ENCODE measurements at regions of chr5 and their contacts with region 1.

Region 1: DNA sequence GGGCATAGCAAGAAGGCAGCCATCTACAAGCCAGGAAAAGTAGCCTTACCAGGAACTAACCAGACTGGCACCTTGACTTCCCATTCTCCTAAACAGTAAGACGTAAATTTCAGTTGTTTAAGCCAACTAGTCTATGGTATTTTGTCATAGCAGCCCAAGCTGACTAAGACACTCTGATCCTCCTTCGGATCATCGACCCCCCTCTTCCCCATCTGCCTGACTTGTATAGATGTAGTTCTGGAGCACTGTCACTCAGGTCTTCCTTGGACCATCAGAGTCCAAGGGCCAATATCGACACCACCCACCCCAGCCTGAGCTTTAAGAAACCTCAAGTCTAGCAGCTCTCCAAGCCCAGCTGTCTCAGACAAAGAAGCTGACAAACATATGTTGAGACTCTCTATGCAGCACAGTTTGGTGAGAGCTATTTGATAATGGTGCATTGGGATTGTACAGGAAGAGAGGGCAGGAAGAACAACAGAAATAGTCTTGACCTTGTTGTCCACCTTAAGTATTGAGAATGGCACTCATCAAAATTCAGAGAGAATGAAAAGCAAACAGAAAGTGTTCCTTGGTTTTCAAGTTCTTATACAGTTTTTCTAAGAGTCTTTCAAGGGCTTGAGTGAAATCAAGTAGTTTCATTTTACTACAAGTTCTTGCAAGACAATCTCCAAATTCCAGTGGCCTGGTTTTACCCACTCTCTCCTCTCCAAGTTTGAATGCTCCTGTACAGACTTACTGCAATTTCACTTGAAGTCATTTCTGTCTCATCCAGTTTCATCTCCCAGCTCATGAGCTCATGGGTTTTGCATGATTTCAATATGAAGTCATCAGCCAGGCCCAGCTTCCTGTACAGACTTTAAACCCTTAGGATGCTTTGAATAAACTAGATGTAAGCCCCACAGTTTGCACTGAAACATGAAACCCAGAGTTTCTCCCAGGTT is 122.3 kb upstream of the RAI14 start:
- DNase-seq: no peak
- H3K4me3 Mint-ChIP-seq: no peak overlapping the region
- H3K27ac Mint-ChIP-seq: no peak overlapping the region
- H3K4me1 Mint-ChIP-seq: no peaks in the 10 kb centered on the region
- H3K27me3 Mint-ChIP-seq: no peaks in the 10 kb centered on the region

Region 2: DNA sequence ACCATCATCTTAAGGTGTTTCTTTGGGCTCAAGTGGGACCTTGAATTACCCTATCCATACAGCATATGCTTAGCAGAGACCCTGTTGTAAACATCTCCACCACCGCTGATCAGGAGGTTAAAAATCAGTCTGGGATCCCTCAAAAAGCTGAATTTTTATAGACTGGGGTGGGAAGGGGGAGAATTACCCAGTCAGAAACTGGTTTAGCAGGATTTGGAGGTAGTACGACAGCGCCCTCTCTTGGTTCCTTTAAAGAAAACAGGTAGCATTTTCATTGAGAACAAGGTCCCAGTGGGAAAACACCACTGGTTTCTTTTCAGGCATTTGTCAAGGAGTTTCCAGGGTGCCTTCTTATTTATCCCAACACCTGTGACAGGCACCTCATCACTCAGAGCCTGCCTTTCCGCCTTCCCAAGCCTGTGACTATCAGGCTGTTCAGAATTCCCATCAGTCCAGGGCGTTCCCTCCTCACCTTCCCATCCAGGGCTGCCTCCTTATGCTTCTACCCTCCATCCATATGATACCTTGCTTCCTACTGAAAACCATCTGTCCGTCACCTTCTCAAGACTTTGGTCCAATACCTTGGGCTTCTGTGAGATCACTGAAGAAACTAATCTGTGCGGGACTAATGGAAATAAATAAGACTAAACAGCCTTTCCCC is 81.6 kb before region 1 on chr5:
- CTCF ChIA-PET with region 1: no interaction called
- DNase-seq: no peak
- H3K4me3 Mint-ChIP-seq: no peak overlapping the region
- H3K27ac Mint-ChIP-seq: no peak overlapping the region
- H3K4me1 Mint-ChIP-seq: no peaks in the 10 kb centered on the region
- H3K27me3 Mint-ChIP-seq: peaks cover 9% of the 10 kb centered on the region

Region 3: DNA sequence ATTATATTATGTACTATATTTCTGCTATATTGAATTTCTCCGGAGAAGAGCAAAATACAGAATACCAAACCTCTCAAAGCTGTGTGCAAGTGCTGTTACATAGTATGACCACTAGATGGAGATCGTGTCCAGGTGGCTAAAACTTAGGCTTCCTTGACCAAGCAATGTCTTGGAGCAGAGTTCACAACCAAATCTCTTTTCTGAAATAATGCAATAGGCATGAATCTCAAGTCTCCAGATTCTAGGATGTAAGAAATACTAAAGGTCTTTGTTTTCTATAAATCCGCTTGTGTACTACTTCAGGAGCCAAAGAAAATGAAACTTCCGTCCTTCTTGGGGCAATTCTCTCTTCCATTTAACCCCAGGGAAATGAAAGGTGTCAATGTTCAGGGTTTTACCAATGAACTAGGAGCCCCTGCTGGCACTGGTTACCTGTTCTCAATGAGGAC is 59.3 kb before region 1 on chr5:
- CTCF ChIA-PET with region 1: interaction called, 10 read pairs
- DNase-seq: no peak
- H3K4me3 Mint-ChIP-seq: no peak overlapping the region
- H3K27ac Mint-ChIP-seq: no peak overlapping the region
- H3K4me1 Mint-ChIP-seq: no peaks in the 10 kb centered on the region
- H3K27me3 Mint-ChIP-seq: peaks cover 9% of the 10 kb centered on the region

Region 4: DNA sequence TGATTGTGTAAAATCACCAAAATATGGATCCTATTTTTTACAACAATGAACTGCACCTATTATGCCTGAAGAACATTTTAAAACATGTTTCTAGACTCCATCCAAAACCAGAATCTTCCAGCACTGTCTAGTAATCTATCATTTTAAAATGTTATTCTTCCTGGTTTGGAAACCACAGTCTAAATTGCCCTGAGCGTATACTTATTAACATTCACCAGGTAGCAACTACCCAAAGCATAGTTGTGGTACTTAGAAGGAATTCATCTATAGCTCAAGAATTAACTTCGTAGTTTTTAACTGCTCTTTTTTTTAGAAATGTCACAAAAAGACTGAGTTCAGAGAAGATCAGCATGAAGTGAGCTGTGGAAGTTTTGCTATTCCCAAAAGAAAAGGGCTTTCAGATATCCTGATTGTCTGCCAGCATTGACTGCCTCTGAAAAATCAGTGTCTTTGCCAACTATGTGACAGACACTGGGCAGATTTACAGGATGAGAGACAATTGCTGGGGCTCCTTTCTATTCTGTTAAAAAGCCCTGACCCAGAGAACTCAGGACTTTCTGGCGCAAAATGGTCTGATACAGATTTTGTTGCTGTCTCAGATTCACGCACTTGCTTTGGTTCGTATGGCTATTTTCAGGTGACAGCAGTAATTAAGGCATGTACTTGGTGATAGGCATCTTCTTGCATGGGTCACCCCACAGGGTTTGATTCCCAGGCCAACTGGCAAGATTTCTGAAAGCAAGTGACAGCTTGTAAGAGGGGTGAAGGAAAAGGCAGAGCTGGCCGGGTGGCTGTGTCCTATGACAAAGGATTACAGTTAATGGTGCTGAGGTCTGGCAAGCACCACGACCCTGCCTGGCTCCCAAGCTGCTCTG is 30.2 kb before region 1 on chr5:
- CTCF ChIA-PET with region 1: no interaction called
- DNase-seq: no peak
- H3K4me3 Mint-ChIP-seq: no peak overlapping the region
- H3K27ac Mint-ChIP-seq: no peak overlapping the region
- H3K4me1 Mint-ChIP-seq: peaks cover 7% of the 10 kb centered on the region
- H3K27me3 Mint-ChIP-seq: peaks cover 22% of the 10 kb centered on the region

Region 5: DNA sequence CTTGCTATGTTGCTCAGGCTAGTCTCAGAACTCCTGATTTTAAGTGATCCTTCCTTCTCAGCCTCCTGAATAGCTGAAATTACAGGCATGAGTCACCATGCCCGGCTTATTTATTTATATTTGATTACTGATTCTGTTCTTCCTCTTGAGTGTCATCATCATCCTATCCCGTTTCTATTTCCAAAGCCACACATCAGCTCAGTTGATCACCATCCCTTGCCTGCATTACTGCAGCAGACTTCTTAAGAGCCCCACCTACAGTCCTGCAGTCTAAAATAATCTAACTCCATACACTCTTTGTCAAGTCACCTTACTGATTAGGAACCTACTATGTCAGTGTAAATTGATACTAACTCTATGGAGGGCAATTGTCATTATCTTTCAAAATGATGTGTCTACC is 16.6 kb before region 1 on chr5:
- CTCF ChIA-PET with region 1: no interaction called
- DNase-seq: no peak
- H3K4me3 Mint-ChIP-seq: no peak overlapping the region
- H3K27ac Mint-ChIP-seq: no peak overlapping the region
- H3K4me1 Mint-ChIP-seq: no peaks in the 10 kb centered on the region
- H3K27me3 Mint-ChIP-seq: peaks cover 6% of the 10 kb centered on the region

Measured in activated naive CD4-positive, alpha-beta T cell treated with anti-CD3 and anti-CD28 coated beads, Interleukin-2, amount 10 ng/mL, durations not matched to agents 7 days and 5 days (primary cell).